Endothelial cell of umbilical vein (primary cell): ENCODE measurements at regions of chr10 and their contacts with region 1.

Region 1: DNA sequence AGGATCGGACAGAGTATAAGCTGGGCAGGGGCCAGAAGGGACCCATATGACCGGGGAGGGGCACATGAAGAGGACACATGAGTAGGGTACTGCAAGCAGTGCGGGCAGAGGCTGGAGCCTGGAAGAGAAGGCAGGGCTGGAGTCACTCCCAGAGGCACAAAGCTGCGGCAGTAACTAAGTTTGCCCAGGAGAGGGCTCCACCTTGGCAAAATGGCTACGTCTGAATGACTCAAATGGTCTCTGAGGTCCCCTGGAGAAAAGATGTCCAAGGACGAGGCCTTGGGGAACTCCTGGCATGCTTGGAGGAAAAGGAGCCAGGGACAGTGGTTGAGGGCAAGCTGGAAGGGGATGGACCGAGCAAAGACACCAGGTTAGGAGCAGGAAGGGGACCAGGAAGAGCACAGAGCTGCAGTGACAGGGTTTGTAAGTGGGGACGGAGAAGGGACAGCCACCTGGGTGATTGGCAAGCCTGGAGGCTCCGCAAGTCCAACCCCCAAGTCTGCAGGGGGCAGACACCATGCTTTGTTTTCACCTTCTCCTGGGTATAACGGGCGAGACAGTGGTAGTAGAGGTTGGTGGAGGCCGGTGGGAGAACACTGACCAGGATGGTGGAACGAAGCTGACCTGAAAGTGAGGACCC is 43.1 kb upstream of the LBX1 start:
- DNase-seq: peak; percentile 70
- H3K4me3 ChIP-seq: no peak overlapping the region
- H3K27ac ChIP-seq: no peak overlapping the region
- H3K4me1 ChIP-seq: no peaks in the 10 kb centered on the region
- H3K27me3 ChIP-seq: peaks cover 3 to 8% of the 10 kb centered on the region in 2 experiments
- CTCF ChIP-seq: peak; percentile 77 to 89
- POLR2A ChIP-seq: no peak

Region 2: DNA sequence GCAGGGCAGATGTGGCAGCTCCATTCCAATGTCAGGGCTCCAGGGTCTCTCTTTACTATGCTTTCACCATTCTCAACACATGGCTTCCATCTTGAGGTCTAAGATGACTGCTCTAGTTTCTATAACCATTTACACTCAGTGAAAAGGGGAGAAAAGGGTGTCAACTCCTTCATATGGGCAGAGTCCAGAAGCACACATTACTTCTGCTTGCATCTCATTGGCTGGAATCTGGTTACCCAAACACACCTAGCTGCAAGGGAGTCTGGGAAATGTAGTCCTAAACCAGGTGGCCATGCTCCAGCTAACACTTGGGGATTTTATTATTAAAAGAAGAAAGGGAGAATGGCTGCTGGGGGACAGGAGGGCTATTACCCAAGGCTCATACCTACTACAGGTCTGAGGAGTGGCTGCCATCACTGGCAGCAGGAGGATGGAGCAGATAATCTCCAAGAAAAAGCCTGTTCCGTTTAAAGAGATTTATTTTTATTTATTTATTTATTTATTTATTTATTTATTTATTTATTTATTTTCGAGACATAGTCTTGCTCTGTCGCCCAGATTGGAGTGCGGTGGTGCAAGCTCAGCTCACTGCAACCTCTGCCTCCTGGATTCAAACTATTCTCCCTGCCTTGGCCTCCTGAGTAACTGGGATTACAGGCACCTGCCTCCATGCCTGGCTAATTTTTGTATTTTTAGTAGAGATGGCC is 14.0 kb before region 1 on chr10:
- CTCF ChIA-PET with region 1: interaction called, 12 read pairs
- POLR2A ChIA-PET with region 1: no interaction called
- dilution Hi-C with region 1: no loop called
- intact Hi-C with region 1: no loop called
- DNase-seq: no peak
- H3K4me3 ChIP-seq: no peak overlapping the region
- H3K27ac ChIP-seq: no peak overlapping the region
- H3K4me1 ChIP-seq: no peaks in the 10 kb centered on the region
- H3K27me3 ChIP-seq: peaks cover 10 to 20% of the 10 kb centered on the region in 2 experiments
- CTCF ChIP-seq: no peak
- POLR2A ChIP-seq: no peak

Region 3: GRCh38 chr10:101285519-101286070 is 13.2 kb after region 1 on chr10:
- CTCF ChIA-PET with region 1: interaction called, 26 read pairs
- POLR2A ChIA-PET with region 1: no interaction called
- dilution Hi-C with region 1: no loop called
- intact Hi-C with region 1: no loop called
- DNase-seq: no peak
- H3K4me3 ChIP-seq: no peak overlapping the region
- H3K27ac ChIP-seq: no peak overlapping the region
- H3K4me1 ChIP-seq: no peaks in the 10 kb centered on the region
- H3K27me3 ChIP-seq: peaks cover 75% of the 10 kb centered on the region in 2 experiments
- CTCF ChIP-seq: no peak
- POLR2A ChIP-seq: no peak

Region 4: GRCh38 chr10:101291331-101292193 is 19.2 kb after region 1 on chr10:
- CTCF ChIA-PET with region 1: interaction called, 26 read pairs
- POLR2A ChIA-PET with region 1: no interaction called
- dilution Hi-C with region 1: no loop called
- intact Hi-C with region 1: no loop called
- DNase-seq: peak; percentile 33
- H3K4me3 ChIP-seq: peak overlapping the region in 2 of 3 experiments; percentile 32 to 46
- H3K27ac ChIP-seq: no peak overlapping the region
- H3K4me1 ChIP-seq: peaks cover 2% of the 10 kb centered on the region
- H3K27me3 ChIP-seq: peaks cover 54 to 56% of the 10 kb centered on the region in 2 experiments
- CTCF ChIP-seq: peak; percentile 61 to 90
- POLR2A ChIP-seq: no peak

Region 5: GRCh38 chr10:101749047-101750016 is 477.0 kb after region 1 on chr10:
- CTCF ChIA-PET with region 1: no interaction called
- POLR2A ChIA-PET with region 1: no interaction called
- dilution Hi-C with region 1: no loop called
- intact Hi-C with region 1: no loop called
- DNase-seq: no peak
- H3K4me3 ChIP-seq: no peak overlapping the region
- H3K27ac ChIP-seq: no peak overlapping the region
- H3K4me1 ChIP-seq: no peaks in the 10 kb centered on the region
- H3K27me3 ChIP-seq: peaks cover 4 to 15% of the 10 kb centered on the region in 2 experiments
- CTCF ChIP-seq: no peak
- POLR2A ChIP-seq: no peak